ENCODE measurements at regions of chr5 and their contacts with region 1.

Region 1: DNA sequence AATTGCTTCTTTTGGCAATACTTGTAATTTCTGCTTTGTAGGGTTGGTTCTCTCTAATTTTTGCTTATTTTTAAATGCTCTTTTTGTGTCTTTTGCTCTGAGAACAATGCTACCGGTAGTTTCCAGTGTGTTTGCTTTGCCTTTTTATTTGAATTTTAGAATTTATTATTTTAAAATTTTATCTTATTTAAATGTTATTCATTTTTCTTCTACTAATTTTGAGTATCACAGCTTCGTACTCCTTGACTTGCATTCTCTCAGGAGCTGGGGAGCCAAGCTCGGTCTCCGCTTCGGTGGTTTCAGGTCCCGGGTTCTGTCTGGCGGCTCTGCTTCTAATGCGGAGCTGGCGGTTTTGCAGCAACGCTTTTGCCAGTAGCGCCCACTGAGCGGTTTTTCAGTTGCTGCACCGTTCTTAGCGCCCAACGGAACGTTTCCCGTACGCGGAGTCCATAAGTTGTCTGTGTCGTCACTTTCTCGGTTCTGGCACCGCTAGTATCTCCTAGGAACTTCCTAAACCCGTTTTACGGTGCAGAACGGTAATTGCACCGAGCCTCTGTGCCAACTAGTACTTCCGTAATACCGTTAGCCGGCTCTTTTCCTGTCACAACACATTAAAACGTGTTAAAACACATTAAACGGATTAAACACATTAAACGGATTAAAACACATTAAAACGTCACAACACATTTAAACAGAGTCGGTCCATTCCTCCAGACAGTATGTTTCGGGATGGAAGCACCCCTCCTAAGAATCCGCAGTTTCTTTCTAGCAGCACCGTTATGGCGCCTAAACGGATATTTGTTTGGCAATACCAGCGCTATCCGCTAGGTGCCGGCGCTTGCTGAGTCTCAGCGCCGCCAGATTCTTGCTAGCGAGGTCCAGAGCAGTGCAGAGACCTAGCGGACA is 45.6 kb downstream of the ANXA2R start:
- DNase-seq: peak; percentile 93
- ATAC-seq: peak; percentile 76
- H3K4me3 ChIP-seq: peak overlapping the region; percentile 80
- H3K27ac ChIP-seq: peak overlapping the region; percentile 100
- H3K4me1 ChIP-seq: no peaks in the 10 kb centered on the region; the same call in 1 of the 2 replicates
- H3K27me3 ChIP-seq: no peaks in the 10 kb centered on the region
- CTCF ChIP-seq: peak; percentile 85
- POLR2A ChIP-seq: no peak; the same call in 1 of the 2 replicates
- RAD21 ChIP-seq: peak; percentile 67

Region 2: DNA sequence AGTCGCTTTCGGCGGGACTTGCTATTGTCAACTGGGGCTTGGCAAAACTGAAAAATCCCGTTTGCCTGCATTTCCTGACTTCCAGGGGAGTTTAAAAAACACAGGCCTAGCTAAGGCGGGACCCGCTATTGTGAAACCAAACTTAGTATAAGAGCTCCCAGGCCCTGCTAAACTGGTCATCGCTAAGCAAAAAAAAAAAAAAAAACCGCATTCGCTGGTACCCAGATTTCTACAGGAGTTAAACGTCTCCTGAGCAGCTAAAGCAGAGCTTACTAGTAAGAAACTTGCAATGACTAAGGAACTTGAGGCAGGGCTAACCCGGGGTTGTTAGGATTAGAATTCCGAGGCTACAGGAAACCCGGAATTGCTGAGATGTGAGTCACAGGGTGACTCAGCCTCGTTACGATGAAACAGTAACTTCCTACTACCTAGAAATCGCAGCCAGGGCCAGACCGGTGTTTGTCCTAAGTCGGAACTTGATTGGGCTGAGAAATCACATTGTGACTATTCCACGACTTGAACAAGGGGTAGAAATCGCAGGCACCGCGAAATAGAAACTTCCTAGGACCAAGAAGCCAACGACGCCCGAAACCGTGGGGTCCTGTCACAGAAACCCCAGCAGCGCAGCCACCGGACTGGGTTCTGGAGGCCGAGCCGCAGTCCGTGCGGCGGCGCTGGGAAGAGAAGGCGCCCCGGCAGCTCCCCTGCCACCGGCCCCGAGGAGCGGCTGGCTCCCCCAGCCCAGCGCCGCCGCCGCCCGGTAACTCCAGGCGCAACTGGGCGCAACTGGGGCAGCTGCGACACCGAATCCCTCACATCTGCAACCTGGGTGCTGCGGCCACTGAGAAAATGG is 43.8 kb before region 1 on chr5:
- CTCF ChIA-PET with region 1: no interaction called
- POLR2A ChIA-PET with region 1: interaction called, 5 read pairs
- dilution Hi-C with region 1: no loop called
- in situ Hi-C with region 1: loop called (anchors 5 kb)
- intact Hi-C with region 1: loop called (anchors 1 kb)
- DNase-seq: peak; percentile 100
- ATAC-seq: peak; percentile 78
- H3K4me3 ChIP-seq: peak overlapping the region; percentile 45
- H3K27ac ChIP-seq: peak overlapping the region; percentile 90
- H3K4me1 ChIP-seq: peaks cover 4% of the 10 kb centered on the region
- H3K27me3 ChIP-seq: no peaks in the 10 kb centered on the region
- CTCF ChIP-seq: no peak; the same call in 1 of the 2 replicates
- POLR2A ChIP-seq: peak; percentile 83
- RAD21 ChIP-seq: no peak

Region 3: DNA sequence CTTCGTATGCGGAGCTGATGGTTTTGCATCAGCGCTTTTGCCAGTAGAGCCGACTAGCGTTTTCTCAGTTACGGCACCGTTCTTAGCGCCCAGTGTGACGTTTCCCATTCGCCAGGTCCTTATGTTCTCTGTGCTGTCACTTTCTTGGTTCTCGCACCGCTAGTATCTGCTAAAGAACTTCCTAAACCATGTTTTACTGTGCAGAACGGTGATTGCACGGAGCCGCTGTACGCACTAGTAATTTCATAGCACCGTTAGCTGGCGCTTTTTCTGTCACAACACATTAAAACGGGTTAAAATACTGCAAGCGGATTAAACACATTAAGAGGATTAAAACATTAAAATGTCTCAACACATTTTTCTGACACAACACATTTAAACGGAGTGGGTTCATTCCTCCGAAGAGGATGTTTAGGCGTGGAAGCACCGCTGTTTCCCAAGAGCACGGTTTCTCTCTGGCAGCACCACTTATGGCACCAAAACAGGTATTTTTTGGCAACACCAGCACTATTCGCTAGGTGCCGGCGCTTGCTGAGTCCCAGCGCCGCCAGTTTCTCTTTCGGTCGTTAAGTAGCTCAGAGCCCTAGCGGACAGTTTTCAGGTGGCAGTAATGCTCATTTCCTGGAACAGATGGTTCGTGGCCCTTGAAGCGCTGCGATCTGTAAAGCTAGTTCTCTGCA is 25.3 kb after region 1 on chr5:
- CTCF ChIA-PET with region 1: interaction called, 6 read pairs
- POLR2A ChIA-PET with region 1: interaction called, 4 read pairs
- dilution Hi-C with region 1: no loop called
- in situ Hi-C with region 1: no loop called
- intact Hi-C with region 1: loop called (anchors 1 kb)
- DNase-seq: peak; percentile 91
- ATAC-seq: peak; percentile 50
- H3K4me3 ChIP-seq: peak overlapping the region; percentile 64
- H3K27ac ChIP-seq: peak overlapping the region; percentile 96
- H3K4me1 ChIP-seq: peaks cover 8% of the 10 kb centered on the region
- H3K27me3 ChIP-seq: no peaks in the 10 kb centered on the region
- CTCF ChIP-seq: peak; percentile 49
- POLR2A ChIP-seq: no peak
- RAD21 ChIP-seq: 0 out of 2 replicates have a peak, but pooled peaks have one; percentile 29

Region 4: DNA sequence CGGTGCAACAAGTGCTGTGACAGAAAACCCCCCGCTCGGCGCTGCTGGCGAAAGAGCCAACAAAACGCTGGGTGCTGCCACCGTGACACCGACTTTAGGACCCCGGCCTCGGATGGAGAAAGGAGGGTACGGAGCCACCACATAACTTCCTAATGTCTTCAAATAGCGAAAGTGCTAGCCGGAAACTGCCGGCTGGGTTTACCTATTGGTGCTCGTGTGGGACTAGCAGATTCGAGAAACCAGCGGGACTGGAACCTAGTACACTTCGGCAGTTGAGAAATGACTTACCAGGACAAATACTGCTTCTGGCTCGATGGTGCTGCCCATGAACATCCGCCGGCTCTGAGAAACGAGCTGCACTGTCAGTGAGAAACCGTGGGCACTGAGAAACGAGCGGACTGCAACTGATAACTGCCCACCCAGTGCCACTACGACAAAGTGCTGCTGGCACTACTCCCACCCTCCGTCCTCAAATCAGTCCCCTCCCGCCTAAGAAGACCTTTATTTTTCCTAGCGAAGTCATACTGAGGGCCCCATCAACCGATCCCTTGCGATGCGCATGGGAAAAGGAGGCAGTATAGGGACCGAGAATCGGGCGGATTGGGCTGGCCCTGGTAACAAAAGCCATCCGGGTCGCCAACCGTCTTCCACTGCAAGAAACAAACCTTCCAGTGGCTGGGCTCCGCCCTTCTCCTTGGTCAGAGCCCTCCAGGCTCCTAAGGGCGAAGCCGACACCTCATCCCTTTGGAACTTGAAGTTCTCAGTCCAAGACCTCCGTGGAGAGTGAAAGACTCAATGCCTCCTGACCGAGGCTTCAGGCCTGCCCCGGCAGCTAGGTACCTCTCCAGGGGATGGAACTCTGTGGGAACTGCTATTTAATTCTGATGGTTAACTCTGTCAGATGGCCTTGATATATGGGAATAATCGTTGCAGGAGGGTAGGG is 72.6 kb after region 1 on chr5:
- CTCF ChIA-PET with region 1: interaction called, 8 read pairs
- POLR2A ChIA-PET with region 1: no interaction called
- dilution Hi-C with region 1: no loop called
- in situ Hi-C with region 1: no loop called
- intact Hi-C with region 1: loop called (anchors 1 kb)
- DNase-seq: peak; percentile 91
- ATAC-seq: peak; percentile 56
- H3K4me3 ChIP-seq: peak overlapping the region; percentile 69
- H3K27ac ChIP-seq: peak overlapping the region; percentile 88
- H3K4me1 ChIP-seq: peaks cover 4% of the 10 kb centered on the region
- H3K27me3 ChIP-seq: no peaks in the 10 kb centered on the region
- CTCF ChIP-seq: no peak
- POLR2A ChIP-seq: peak; percentile 89
- RAD21 ChIP-seq: no peak